Activated CD4-positive, alpha-beta T cell treated with anti-CD3 and anti-CD28 coated beads for 36 hours (primary cell): ENCODE measurements at regions of chr10 and their contacts with region 1.

Region 1: GRCh38 chr10:45672181-45673073 is at the start of gene ZFAND4:
- DNase-seq: peak; percentile 97
- ATAC-seq: peak; percentile 97
- H3K4me3 Mint-ChIP-seq: peak within 1 kb of the TSS; percentile 82
- H3K27ac Mint-ChIP-seq: peak within 1 kb of the TSS; percentile 85
- H3K4me1 Mint-ChIP-seq: peaks cover 41% of the 10 kb centered on the region
- H3K27me3 Mint-ChIP-seq: no peaks in the 10 kb centered on the region
- total RNA-seq, gene ZFAND4: 11.5 to 11.9 TPM

Region 2: DNA sequence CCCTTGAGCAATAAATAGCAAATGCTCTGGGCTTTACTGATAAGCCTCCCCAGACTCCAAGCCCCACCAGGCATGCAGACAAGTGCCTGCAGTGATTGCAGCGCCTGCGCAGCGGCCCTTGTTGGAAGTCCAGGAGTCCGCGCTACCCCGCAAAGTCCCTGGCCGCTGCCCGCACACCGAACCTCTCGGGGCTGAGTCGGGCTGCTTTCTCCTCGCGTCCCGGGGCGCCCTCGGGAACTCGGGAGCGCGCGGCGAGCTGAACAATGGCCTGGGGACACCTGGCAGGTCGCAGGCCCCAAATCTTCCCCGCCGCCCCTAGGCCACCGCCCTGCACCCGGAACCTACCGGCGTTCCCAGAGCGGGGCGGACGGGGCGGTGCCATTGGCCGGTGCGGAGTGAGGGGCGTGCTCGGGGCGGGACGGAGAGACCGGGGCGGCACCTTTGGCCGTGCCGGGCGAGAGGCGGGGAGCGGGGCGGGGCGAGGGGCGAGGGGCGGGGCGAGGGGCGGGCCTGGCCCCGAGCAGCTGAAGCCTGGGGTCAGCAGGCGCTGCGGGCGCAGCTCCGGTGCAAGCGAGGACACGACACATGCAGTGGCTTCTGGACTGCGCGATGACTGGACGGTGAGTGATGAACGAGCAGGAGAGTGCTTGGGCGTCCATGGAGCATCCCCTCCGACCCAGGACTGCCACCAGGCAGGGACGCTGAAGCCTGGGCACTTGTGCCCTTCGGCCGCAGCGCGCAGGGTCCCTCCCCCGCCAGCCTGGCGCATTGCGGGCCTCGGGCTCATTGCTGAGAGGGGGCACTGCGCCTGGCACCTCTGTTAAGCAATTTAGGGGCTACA is 713.0 kb before region 1 on chr10 and contains the start of gene RASSF4:
- CTCF ChIA-PET with region 1: interaction called, 3 read pairs
- POLR2A ChIA-PET with region 1: no interaction called
- intact Hi-C with region 1: loop called in 1 of 2 experiments (anchors 1 kb)
- DNase-seq: peak; percentile 96
- ATAC-seq: peak; percentile 100
- H3K4me3 Mint-ChIP-seq: peak within 1 kb of the TSS; percentile 80
- H3K27ac Mint-ChIP-seq: peak within 1 kb of the TSS; percentile 70
- H3K4me1 Mint-ChIP-seq: peaks cover 19% of the 10 kb centered on the region
- H3K27me3 Mint-ChIP-seq: no peaks in the 10 kb centered on the region
- total RNA-seq, gene RASSF4: 1.0 to 1.3 TPM

Region 3: GRCh38 chr10:45249978-45250693 is 422.3 kb before region 1 on chr10:
- CTCF ChIA-PET with region 1: no interaction called
- POLR2A ChIA-PET with region 1: interaction called, 8 read pairs
- intact Hi-C with region 1: loop called in 1 of 2 experiments (anchors 5 kb)
- DNase-seq: no peak
- ATAC-seq: peak; percentile 26
- H3K4me3 Mint-ChIP-seq: peak overlapping the region; percentile 22
- H3K27ac Mint-ChIP-seq: no peak overlapping the region
- H3K4me1 Mint-ChIP-seq: peaks cover 2% of the 10 kb centered on the region
- H3K27me3 Mint-ChIP-seq: peaks cover 3% of the 10 kb centered on the region

Region 4: GRCh38 chr10:45325116-45325515 is 347.3 kb before region 1 on chr10:
- CTCF ChIA-PET with region 1: no interaction called
- POLR2A ChIA-PET with region 1: no interaction called
- intact Hi-C with region 1: no loop called
- DNase-seq: no peak
- ATAC-seq: no peak
- H3K4me3 Mint-ChIP-seq: no peak overlapping the region
- H3K27ac Mint-ChIP-seq: no peak overlapping the region
- H3K4me1 Mint-ChIP-seq: no peaks in the 10 kb centered on the region
- H3K27me3 Mint-ChIP-seq: peaks cover 18% of the 10 kb centered on the region

Region 5: GRCh38 chr10:45464958-45465567 is 207.4 kb before region 1 on chr10:
- CTCF ChIA-PET with region 1: interaction called, 10 read pairs
- POLR2A ChIA-PET with region 1: interaction called, 3 read pairs
- intact Hi-C with region 1: loop called (anchors 1 to 2 kb)
- DNase-seq: peak; percentile 89
- ATAC-seq: peak; percentile 100
- H3K4me3 Mint-ChIP-seq: no peak overlapping the region
- H3K27ac Mint-ChIP-seq: no peak overlapping the region
- H3K4me1 Mint-ChIP-seq: peaks cover 11% of the 10 kb centered on the region
- H3K27me3 Mint-ChIP-seq: no peaks in the 10 kb centered on the region

Region 6: DNA sequence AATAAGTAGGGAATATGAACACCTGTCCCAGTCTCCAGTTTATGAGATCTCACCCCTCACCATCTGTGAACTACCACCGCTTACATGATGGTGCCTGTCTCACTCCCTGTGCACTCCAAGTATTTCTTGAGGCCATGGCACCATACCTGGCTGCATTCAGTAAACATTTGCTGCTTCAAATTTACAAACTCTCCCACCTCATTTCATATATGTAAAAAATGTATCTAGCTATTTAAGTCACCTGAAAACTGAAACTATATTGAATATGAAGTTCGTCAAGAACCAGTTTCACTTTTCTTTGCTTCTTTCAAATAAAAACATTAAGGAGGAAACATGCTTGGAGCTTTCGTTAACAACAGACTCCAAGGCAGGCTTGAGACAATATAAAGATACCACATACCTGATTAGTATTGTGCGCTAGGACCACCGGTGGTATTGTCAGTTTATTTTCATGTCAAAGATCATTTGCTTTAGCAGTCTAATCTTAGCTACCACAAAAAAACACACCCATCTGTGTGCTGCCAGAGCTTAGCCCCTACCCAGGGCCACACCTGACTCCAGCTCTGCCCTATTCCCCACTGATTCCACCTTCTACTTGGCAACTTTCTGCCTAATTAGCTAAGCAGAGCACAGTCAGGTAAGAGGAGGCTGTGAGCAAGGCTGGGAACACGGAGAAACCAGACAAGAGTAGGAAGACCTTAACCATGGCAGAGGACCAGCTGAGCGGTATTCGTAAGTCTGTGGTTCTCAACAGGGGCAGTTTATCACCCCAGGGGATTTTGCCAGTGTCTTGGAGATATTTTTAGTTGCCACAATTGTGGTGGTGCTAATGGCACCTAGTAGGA is 91.8 kb before region 1 on chr10:
- CTCF ChIA-PET with region 1: interaction called, 3 read pairs
- POLR2A ChIA-PET with region 1: no interaction called
- intact Hi-C with region 1: loop called in 1 of 2 experiments (anchors 5 kb)
- DNase-seq: peak; percentile 41
- ATAC-seq: peak; percentile 68
- H3K4me3 Mint-ChIP-seq: peak overlapping the region; percentile 76
- H3K27ac Mint-ChIP-seq: peak overlapping the region; percentile 95
- H3K4me1 Mint-ChIP-seq: peaks cover 37% of the 10 kb centered on the region
- H3K27me3 Mint-ChIP-seq: no peaks in the 10 kb centered on the region

Region 7: DNA sequence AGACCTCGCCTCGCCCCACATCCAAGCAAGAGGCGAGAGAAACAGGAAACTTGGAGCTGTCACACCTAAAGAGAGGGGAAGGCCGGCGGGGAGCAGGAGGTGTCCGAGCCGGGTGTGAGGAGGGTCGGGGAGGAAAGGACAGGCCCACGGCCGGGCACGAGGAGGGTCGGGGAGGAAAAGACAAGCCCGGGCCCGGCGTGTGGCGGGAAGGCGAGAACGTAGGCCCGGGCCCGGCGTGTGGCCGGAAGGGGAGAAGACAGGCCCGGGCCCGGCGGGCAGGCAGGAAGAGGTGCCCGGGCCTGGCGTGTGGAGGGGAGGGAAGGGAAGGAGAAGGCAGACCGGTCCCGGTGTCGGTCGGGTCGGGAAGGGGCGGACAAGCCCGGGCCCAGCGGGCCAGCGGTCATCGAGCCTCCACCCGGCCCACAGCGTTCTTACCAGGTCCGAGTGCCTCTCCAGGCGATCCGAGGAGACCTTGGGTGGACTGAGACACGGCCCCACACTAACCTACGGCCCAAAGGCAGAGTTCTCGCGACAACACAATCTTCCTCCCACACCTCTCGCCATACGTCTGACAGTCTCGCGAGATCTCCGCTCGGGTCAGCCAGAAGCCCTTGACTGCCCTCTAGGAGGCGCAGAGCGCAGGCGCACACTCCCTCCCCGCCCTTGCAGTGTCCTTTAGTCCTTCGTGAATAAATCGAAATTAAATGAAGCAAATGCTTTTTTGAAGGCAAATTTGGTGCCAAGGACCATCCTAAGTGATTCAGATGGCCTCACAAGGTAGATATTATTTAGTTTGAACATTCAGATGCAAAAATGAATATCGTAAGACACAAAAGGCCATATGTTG is 357.9 kb after region 1 on chr10 and contains the start of gene NCOA4:
- CTCF ChIA-PET with region 1: interaction called, 9 read pairs
- POLR2A ChIA-PET with region 1: no interaction called
- intact Hi-C with region 1: loop called in 1 of 2 experiments (anchors 1 kb)
- DNase-seq: peak; percentile 98
- ATAC-seq: peak; percentile 96
- H3K4me3 Mint-ChIP-seq: peak within 1 kb of the TSS; percentile 97
- H3K27ac Mint-ChIP-seq: peak within 1 kb of the TSS; percentile 97
- H3K4me1 Mint-ChIP-seq: peaks cover 46% of the 10 kb centered on the region
- H3K27me3 Mint-ChIP-seq: no peaks in the 10 kb centered on the region
- total RNA-seq, gene NCOA4: 84.3 to 97.4 TPM